A549 (cell line): ENCODE measurements at regions of chr3 and their contacts with region 1.

Region 1: GRCh38 chr3:39541917-39542329 is 74.4 kb downstream of the MOBP start:
- DNase-seq: peak; percentile 12 to 13
- ATAC-seq: peak in 1 of 2 experiments; percentile 43; a peak in 1 of 6 replicates
- H3K4me3 ChIP-seq: no peak overlapping the region
- H3K27ac ChIP-seq: no peak overlapping the region
- H3K4me1 ChIP-seq: no peaks in the 10 kb centered on the region
- CTCF ChIP-seq: peak; percentile 77
- EP300 ChIP-seq: no peak
- POLR2A ChIP-seq: no peak
- RAD21 ChIP-seq: peak; percentile 75 to 78

Region 2: GRCh38 chr3:39141171-39141995 is 400.5 kb before region 1 on chr3:
- CTCF ChIA-PET with region 1: no interaction called
- POLR2A ChIA-PET with region 1: no interaction called
- DNase-seq: no peak
- ATAC-seq: peak in 1 of 2 experiments; percentile 28; a peak in 3 of 6 replicates
- H3K4me3 ChIP-seq: no peak overlapping the region
- H3K27ac ChIP-seq: peak overlapping the region in 1 of 2 experiments; percentile 58; a peak in 3 of 6 replicates
- H3K4me1 ChIP-seq: peaks cover 35% of the 10 kb centered on the region
- CTCF ChIP-seq: no peak
- EP300 ChIP-seq: no peak
- POLR2A ChIP-seq: no peak
- RAD21 ChIP-seq: no peak

Region 3: DNA sequence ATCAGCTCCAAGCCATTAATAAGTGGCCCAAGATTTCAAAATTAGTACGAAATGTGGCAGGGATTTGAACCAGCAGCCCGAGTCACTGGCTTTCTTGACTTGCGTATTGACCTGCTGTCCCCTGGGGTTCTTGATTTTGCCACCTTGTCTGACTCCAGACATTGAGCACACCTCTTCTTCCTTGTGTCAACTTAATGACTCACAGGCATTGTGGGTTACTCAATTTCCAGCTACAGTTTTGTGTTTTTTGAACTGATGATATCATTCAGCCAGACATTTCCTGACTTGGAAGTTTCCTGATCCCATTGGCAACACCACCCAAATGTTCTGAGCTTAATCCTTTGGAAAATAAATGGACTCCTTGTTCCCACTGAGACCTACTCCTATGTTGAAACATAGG is 10.3 kb before region 1 on chr3:
- CTCF ChIA-PET with region 1: interaction called, 23 read pairs
- POLR2A ChIA-PET with region 1: no interaction called
- DNase-seq: peak; percentile 28 to 64
- ATAC-seq: peak; percentile 66 to 78
- H3K4me3 ChIP-seq: no peak overlapping the region
- H3K27ac ChIP-seq: peak overlapping the region in 1 of 2 experiments; percentile 62; a peak in 1 of 6 replicates
- H3K4me1 ChIP-seq: peaks cover 21% of the 10 kb centered on the region
- CTCF ChIP-seq: no peak
- EP300 ChIP-seq: no peak
- POLR2A ChIP-seq: no peak
- RAD21 ChIP-seq: no peak

Region 4: DNA sequence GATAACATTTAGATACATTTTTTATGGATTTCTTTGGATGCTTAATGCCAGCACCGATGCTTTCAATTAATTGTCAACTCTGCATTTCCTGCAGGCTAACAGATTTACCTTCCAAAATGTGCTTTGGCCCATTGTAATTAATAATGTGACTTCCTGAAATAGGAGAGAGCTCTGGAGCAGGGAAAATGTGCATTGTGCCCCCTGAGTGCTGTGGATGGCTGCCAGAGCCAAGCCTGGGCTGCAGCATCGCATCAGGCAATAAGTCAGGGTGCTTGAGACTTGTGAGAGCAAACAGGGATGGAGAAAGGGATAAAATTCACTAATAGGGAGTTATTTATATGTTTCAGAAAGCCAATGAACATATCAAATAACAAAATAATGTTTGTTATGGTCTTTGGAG is 59.3 kb after region 1 on chr3:
- CTCF ChIA-PET with region 1: no interaction called
- POLR2A ChIA-PET with region 1: no interaction called
- DNase-seq: no peak
- ATAC-seq: no peak
- H3K4me3 ChIP-seq: no peak overlapping the region
- H3K27ac ChIP-seq: no peak overlapping the region
- H3K4me1 ChIP-seq: no peaks in the 10 kb centered on the region
- CTCF ChIP-seq: no peak
- EP300 ChIP-seq: no peak
- POLR2A ChIP-seq: no peak
- RAD21 ChIP-seq: no peak

Region 5: DNA sequence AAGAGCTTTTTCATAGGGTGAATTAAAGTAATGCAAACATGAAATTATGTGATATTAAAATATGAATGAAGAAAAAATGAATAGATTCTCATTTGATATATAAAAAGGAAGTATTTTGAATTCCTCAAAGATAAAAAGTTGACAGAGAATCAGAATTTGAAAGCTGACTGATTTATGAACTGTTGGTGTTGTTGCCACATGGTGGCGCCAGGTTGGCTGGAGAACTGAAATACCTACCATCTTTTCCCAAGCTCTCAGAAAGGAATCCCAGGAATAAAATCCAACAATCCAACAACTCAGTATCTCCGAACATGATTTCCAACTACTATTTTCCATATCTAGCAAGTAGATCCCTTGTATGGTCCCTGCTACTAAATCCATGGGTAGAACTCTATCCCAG is 270.6 kb after region 1 on chr3:
- CTCF ChIA-PET with region 1: no interaction called
- POLR2A ChIA-PET with region 1: no interaction called
- DNase-seq: no peak
- ATAC-seq: no peak
- H3K4me3 ChIP-seq: no peak overlapping the region
- H3K27ac ChIP-seq: no peak overlapping the region
- H3K4me1 ChIP-seq: peaks cover 11% of the 10 kb centered on the region; the same call in 2 of the 3 replicates
- CTCF ChIP-seq: peak; percentile 38
- EP300 ChIP-seq: no peak
- POLR2A ChIP-seq: no peak
- RAD21 ChIP-seq: peak; percentile 13 to 36; a peak in 2 of 5 replicates

Region 6: GRCh38 chr3:40179016-40179415 is 637.1 kb after region 1 on chr3:
- CTCF ChIA-PET with region 1: interaction called, 45 read pairs
- POLR2A ChIA-PET with region 1: no interaction called
- DNase-seq: peak; percentile 31 to 55
- ATAC-seq: peak; percentile 77 to 91; a peak in 5 of 6 replicates
- H3K4me3 ChIP-seq: no peak overlapping the region
- H3K27ac ChIP-seq: no peak overlapping the region
- H3K4me1 ChIP-seq: no peaks in the 10 kb centered on the region
- CTCF ChIP-seq: peak; percentile 72
- EP300 ChIP-seq: no peak
- POLR2A ChIP-seq: no peak
- RAD21 ChIP-seq: peak; percentile 75 to 82